ENCODE measurements at regions of chr1 and their contacts with region 1.

Region 1: DNA sequence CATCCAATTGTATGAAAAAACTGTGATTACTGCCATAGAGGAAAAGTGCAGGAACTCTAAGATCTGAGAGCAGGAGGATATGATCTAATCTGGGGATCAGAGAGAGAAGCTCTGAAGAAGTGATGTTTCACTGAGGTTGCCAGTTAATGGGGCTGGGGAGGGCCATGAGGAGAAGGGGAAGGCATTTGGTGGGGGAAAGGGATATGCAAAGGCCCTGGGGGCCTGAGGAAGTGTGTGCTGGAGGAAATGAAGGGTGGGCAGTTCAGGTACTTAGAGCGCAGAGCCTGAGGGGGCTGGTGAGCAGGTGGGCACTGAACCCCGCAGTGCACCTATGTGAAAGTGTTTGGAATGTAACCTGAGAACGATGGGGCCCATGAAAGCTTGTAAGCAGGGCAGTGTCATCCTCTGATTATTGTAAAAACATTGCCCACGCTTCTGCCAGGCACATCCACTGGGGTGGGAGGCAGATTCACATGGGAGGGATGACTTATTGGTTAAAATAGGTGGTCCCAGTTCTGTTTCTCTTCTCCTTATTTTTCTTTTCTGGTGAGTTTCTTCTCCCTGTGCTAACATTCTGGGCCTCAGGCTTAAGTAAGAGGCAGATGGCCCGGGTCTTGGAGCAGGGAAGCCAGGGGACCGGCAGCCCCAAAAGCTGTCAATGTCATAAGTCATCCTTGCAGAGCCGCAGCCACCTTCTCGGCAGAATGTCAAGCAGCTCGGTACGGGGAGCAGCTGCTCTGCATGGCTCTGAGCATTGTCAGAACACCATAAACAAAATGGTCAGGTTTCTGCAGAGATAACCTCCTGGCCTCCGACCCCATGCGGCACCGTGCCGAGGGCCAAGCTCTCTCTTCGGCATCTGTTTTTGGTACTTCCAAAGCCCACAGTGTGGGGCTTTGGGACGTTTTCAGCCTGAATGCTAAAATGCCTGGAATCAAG is 492.0 kb upstream of the VAMP3 start:
- DNase-seq: peak in 1 of 2 experiments; percentile 37
- H3K4me3 ChIP-seq: no peak overlapping the region
- H3K27ac ChIP-seq: no peak overlapping the region
- H3K4me1 ChIP-seq: peaks cover 0 to 11% (median 5%) of the 10 kb centered on the region in 4 experiments; a peak in 4 of 7 replicates
- H3K27me3 ChIP-seq: no peaks in the 10 kb centered on the region; a peak in 2 of 7 replicates
- CTCF ChIP-seq: no peak
- EP300 ChIP-seq: no peak
- POLR2A ChIP-seq: no peak
- RAD21 ChIP-seq: no peak

Region 2: GRCh38 chr1:7267493-7267892 is 11.6 kb before region 1 on chr1:
- CTCF ChIA-PET with region 1: interaction called, 14 read pairs
- POLR2A ChIA-PET with region 1: interaction called, 3 read pairs
- DNase-seq: peak in 1 of 2 experiments; percentile 7
- H3K4me3 ChIP-seq: no peak overlapping the region
- H3K27ac ChIP-seq: no peak overlapping the region
- H3K4me1 ChIP-seq: no peaks in the 10 kb centered on the region
- H3K27me3 ChIP-seq: no peaks in the 10 kb centered on the region
- CTCF ChIP-seq: no peak
- EP300 ChIP-seq: no peak
- POLR2A ChIP-seq: no peak
- RAD21 ChIP-seq: no peak

Region 3: GRCh38 chr1:7366955-7367665 is 88.0 kb after region 1 on chr1:
- CTCF ChIA-PET with region 1: no interaction called
- POLR2A ChIA-PET with region 1: no interaction called
- DNase-seq: no peak
- H3K4me3 ChIP-seq: no peak overlapping the region
- H3K27ac ChIP-seq: no peak overlapping the region
- H3K4me1 ChIP-seq: no peaks in the 10 kb centered on the region
- H3K27me3 ChIP-seq: no peaks in the 10 kb centered on the region; a peak in 1 of 7 replicates
- CTCF ChIP-seq: no peak
- EP300 ChIP-seq: no peak
- POLR2A ChIP-seq: no peak
- RAD21 ChIP-seq: no peak